Right ventricle myocardium inferior (tissue), 1 donor: ENCODE measurements at regions of chr3 and their contacts with region 1.

Region 1: GRCh38 chr3:193240850-193241706 is at the start of gene PLAAT1:
- DNase-seq: peak; percentile 70
- ATAC-seq: peak; percentile 93
- total RNA-seq, gene PLAAT1: 4.2 TPM

Region 2: DNA sequence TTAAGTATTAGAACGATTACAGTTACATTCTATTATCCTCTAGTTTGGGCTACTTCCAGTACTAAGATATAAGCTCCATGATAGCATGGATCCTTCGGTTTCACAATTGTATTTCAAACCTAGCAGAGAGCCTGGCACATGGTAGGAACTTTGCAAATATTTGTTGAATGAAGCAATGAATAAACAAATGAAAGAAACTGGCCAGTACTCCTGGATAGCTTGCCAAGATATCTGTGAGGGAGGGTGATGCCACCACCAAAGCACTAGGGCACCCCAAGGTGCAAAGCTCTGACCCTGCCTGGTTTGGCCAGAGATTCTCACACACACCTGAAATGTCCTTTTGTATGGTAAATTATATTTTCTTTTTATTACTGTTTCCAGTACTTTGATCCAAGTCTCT is 44.3 kb before region 1 on chr3:
- intact Hi-C with region 1: no loop called
- DNase-seq: no peak
- ATAC-seq: no peak

Region 3: DNA sequence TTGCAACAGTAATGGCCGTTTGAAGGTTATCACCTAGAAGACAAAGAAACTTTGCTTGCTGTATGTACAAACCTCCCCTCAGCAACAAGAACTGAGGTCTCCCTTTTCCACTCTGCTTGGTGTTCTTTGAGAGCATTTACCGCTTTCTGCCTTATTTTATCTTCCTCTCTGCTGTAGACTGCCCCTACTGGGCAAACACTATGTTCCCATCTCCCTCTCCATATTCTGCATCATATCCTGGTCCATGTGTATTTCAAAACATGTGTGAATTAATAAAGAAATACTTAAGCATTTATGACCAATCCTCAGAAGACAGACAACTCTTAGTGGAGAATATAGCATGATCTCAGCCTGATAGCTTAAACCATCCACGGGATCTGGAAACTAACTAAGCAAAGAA is 73.1 kb after region 1 on chr3:
- intact Hi-C with region 1: loop called (anchors 5 kb)
- DNase-seq: no peak
- ATAC-seq: no peak